ENCODE measurements at regions of chr14 and their contacts with region 1.

Region 1: GRCh38 chr14:77961644-77962580 is 162.0 kb downstream of the ADCK1 start:
- DNase-seq: no peak

Region 2: DNA sequence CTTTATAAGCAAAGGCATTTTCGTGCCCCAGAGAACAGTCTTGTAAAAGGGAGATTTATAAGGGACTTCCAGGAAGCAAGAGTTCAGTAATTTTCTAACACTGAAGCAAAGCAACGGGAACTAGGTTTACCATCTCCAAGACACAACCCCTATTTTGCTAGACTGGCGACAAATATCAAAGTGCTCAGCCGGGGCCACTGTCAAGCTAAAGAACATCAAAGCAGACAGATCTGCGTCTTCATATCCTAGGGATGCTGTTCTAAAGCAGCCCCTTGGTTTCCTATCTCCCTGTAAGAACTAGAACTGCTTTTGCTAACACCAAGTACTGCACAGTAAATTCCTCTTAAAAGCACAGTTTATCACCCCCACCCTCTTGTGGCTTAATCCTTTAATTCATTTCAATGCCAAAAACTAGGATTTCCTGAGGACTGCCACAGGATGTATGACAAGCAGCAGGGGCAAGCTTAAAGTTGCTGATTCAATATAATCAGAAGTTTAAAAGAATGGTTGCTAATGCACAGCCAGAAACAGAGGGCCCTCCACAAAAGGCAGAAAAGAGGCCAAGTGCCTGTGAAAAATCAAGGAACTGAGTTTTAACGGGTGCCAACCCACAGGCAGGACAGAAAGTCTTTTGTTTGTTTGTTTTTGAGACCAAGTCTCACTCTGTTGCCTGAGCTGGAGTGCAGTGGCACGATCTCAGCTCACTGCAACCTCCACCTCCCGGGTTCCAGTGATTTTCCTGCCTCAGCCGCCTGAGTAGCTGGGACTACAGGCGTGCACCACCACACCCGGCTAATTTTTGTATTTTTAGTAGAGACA is 419.3 kb before region 1 on chr14:
- intact Hi-C with region 1: loop called in 1 of 2 experiments (anchors 5 kb)
- DNase-seq: no peak

Region 3: DNA sequence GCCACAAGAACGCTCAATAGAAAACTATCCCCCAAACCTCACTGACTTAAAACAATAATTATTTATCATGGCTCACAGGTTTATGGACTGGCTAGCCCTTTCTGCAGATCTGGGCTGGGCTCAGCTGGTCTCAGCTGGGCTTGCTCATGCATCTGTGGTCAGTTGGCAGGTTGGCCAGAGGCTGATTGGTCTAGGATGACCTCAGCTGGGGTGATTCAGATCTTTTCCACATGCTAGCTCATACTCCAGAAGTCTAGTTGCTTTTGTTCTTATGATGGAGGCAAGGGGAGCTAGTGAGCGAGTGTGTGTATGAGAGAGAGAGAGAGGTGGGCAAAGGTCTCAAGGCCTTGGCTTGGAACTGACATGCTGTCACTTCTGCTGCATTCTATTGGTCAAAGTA is 27.1 kb after region 1 on chr14:
- intact Hi-C with region 1: no loop called
- DNase-seq: peak; percentile 90